Right lobe of liver (tissue), 6 donors: ENCODE measurements at regions of chr14 and their contacts with region 1.

Region 1: GRCh38 chr14:33839193-33840076 is 111.4 kb downstream of the EGLN3 start:
- DNase-seq: peak in 1 of 3 donors; percentile 27
- ATAC-seq: peak; percentile 86 to 92 (median 87)
- H3K4me3 ChIP-seq: no peak overlapping the region
- H3K27ac ChIP-seq: no peak overlapping the region
- H3K4me1 ChIP-seq: no peaks in the 10 kb centered on the region
- H3K27me3 ChIP-seq: no peaks in the 10 kb centered on the region
- CTCF ChIP-seq: peak; percentile 67 to 89 (median 84)
- POLR2A ChIP-seq: no peak

Region 2: DNA sequence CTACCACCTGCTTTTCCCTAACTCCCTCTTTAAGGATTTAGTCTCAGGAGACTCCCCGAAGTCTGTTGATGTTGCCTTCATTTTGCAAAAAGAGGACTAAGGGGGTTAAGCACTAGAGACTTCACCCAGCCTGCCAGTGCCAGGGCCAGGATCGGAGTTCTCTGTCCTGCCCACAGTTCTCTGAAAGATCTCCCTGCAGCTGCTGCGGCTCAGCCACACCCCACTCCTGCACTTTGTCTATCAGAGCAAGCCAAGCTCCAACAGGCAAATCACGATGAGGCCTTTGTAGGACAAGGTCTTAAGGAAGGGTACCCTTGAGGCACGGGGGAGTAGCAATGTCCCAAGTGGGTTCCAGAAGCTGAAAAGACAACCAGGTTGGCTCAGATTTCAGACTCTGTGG is 260.2 kb after region 1 on chr14:
- intact Hi-C with region 1: loop called in 1 of 2 experiments (anchors 10 kb)
- DNase-seq: no peak
- ATAC-seq: no peak
- H3K4me3 ChIP-seq: no peak overlapping the region
- H3K27ac ChIP-seq: no peak overlapping the region
- H3K4me1 ChIP-seq: no peaks in the 10 kb centered on the region
- H3K27me3 ChIP-seq: no peaks in the 10 kb centered on the region
- CTCF ChIP-seq: no peak
- POLR2A ChIP-seq: no peak

Region 3: GRCh38 chr14:34227834-34228649 is 388.6 kb after region 1 on chr14:
- intact Hi-C with region 1: loop called in 1 of 2 experiments (anchors 10 kb)
- DNase-seq: peak; percentile 63 to 70 (median 66)
- ATAC-seq: peak; percentile 98 to 100 (median 98)
- H3K4me3 ChIP-seq: no peak overlapping the region
- H3K27ac ChIP-seq: no peak overlapping the region
- H3K4me1 ChIP-seq: no peaks in the 10 kb centered on the region
- H3K27me3 ChIP-seq: no peaks in the 10 kb centered on the region
- CTCF ChIP-seq: peak; percentile 69 to 80 (median 77)
- POLR2A ChIP-seq: no peak

Region 4: DNA sequence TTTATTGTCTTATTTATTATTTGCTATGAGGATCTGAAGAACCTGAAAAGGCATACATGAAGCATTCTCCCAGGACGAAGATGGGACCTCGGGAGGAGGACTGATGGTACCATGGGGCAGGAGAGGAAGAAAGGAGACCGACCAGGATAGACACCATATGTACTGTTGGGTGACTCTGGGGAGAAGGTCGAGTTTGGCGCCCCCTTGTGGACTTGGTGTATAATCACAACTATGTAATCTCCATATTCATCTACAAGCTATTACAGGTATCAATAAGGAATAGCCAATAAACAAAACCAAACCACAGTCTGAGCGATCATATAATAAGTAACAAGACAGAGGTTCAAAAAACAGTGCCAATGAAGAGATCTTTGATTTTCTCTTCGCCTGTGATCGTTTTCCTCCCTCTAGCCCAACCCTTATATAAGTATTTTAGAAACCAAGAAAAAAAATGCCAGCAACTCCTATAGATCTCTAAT is 483.5 kb after region 1 on chr14:
- intact Hi-C with region 1: loop called in 1 of 2 experiments (anchors 10 kb)
- DNase-seq: peak; percentile 64 to 66 (median 66)
- ATAC-seq: peak; percentile 79 to 86 (median 84)
- H3K4me3 ChIP-seq: no peak overlapping the region
- H3K27ac ChIP-seq: no peak overlapping the region
- H3K4me1 ChIP-seq: no peaks in the 10 kb centered on the region
- H3K27me3 ChIP-seq: no peaks in the 10 kb centered on the region
- CTCF ChIP-seq: peak; percentile 43 to 80 (median 78)
- POLR2A ChIP-seq: no peak